Sigmoid colon (tissue), 7 donors: ENCODE measurements at regions of chr12 and their contacts with region 1.

Region 1: DNA sequence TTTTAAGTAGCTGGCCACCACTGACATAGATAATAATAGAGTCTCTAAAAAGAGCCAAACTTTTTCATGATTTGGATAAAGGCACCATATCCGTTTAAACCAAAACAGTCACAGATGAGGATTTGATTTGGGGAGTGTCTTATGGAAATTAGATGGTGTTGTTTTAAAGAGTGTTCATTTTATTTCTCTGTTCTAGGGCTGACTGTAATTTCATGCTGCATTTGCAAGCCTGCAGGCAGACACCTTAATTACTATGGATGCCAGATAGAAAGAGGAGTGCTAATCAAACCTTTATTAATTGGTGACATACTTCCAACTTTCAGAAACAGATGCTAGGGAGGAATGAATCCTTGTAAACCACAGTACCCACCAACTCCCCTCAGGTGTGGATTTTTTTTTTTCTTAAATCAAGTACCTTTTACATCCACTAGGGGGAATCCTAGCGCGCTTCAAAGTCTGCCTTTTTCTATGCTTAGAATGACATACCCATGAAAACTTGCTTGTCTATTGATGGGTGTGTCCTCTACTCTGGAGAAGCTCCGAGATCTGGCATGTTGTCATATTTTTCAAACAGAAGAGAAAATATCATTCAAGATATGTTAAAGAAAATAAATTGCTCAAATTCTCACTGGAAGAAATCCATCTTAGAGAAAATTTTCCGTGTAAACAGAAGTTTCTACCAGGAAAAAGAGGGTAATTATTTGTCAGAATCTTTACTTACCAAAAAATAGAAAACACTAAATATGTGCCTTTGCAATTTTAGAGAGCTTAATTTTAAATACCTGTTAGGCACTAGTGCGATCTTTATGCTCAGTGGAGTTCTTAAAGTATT is 14.2 kb upstream of the PLXNC1 start:
- DNase-seq: no peak
- H3K4me3 ChIP-seq: no peak overlapping the region
- H3K27ac ChIP-seq: no peak overlapping the region
- H3K4me1 ChIP-seq: no peaks in the 10 kb centered on the region
- H3K27me3 ChIP-seq: no peaks in the 10 kb centered on the region
- CTCF ChIP-seq: peak; percentile 34 to 76 (median 58)
- EP300 ChIP-seq: no peak
- POLR2A ChIP-seq: no peak

Region 2: DNA sequence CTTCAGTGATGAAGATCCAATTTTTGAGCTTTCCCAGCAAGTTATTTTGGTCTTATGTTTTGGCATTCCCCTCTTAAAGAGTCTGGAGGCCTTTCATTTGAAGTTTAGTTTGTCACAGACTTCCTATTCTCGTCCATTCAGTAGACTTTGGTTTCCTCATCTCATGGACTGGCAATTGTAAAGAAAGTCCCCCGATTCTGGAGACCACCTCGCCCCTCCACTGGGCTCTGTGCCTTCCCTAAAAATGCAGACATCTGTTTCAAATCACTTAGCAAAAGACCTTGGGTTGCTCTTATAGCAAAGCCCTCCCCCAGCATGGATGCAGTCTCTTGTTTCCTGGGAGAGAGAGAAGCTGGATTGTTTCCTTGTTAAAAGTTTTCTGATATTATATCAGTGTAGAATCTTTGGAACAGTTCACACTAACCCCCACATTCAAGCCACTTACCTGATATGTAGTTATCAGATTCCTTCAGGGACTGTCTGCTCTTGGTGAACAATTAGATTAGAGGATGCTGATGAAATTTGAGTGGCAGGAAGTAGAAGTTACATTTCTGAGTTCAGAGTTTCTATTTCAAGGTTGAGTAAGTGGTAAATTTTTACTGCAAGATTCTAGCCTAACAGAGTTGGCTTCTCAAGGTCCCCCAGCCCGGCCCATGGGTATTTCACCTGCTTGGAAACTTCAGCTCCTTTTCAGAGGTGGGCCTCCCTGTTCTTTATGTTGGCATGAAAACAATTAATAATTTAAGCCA is 70.5 kb after region 1 on chr12:
- intact Hi-C with region 1: no loop called
- DNase-seq: no peak
- H3K4me3 ChIP-seq: no peak overlapping the region
- H3K27ac ChIP-seq: no peak overlapping the region
- H3K4me1 ChIP-seq: peaks cover 0 to 5% (median 0%) of the 10 kb centered on the region in 4 donors
- H3K27me3 ChIP-seq: no peaks in the 10 kb centered on the region
- CTCF ChIP-seq: no peak
- EP300 ChIP-seq: no peak
- POLR2A ChIP-seq: no peak

Region 3: GRCh38 chr12:94532490-94533422 is 398.6 kb after region 1 on chr12:
- intact Hi-C with region 1: loop called (anchors 2 kb)
- DNase-seq: peak; percentile 80
- H3K4me3 ChIP-seq: no peak overlapping the region
- H3K27ac ChIP-seq: no peak overlapping the region
- H3K4me1 ChIP-seq: peaks cover 0 to 6% (median 6%) of the 10 kb centered on the region in 4 donors
- H3K27me3 ChIP-seq: no peaks in the 10 kb centered on the region
- CTCF ChIP-seq: peak; percentile 57 to 78 (median 76)
- EP300 ChIP-seq: no peak
- POLR2A ChIP-seq: no peak